ENCODE measurements at regions of chr9 and their contacts with region 1.

Region 1: DNA sequence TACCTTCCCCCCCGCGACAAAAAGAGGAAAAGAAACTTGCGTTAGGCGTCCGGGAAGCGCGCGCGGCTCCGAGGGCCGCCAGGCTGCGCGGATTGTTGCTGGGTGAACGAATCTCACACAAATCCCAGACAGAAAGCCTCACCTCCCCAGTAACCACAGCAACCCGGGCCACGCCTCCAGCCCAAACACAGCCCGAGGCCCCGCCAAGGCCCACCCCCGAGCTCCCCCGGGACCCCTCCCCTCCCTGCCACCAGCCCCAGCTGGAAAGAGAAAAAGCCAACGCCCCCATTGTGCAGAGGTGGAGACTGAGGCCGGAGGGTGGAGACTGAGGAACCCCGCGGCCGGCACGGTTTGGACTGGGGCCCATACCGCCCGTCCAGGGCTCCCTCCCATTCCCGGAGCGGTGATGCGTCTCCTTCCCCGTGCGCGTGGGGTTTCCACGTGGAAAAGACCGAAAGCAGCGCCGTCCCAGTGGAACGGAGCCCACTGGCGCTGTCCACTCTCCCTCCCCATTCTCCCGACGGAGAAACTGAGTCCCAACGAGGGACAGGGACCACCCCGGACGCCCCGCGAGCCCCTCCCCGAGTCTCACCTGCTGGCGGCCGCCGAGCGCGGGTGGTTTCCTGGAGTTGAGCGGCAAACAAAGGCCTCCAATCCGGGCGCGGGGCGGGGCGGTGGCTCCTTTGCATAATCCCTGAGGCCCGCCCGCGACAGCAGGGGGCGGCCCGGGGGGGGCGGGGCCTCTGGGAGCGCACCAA is 10.2 kb upstream of the AKNA start:
- DNase-seq: peak; percentile 99
- H3K4me3 Mint-ChIP-seq: peak overlapping the region; percentile 97
- H3K27ac Mint-ChIP-seq: peak overlapping the region; percentile 87
- H3K4me1 Mint-ChIP-seq: peaks cover 33% of the 10 kb centered on the region
- H3K27me3 Mint-ChIP-seq: no peaks in the 10 kb centered on the region

Region 2: DNA sequence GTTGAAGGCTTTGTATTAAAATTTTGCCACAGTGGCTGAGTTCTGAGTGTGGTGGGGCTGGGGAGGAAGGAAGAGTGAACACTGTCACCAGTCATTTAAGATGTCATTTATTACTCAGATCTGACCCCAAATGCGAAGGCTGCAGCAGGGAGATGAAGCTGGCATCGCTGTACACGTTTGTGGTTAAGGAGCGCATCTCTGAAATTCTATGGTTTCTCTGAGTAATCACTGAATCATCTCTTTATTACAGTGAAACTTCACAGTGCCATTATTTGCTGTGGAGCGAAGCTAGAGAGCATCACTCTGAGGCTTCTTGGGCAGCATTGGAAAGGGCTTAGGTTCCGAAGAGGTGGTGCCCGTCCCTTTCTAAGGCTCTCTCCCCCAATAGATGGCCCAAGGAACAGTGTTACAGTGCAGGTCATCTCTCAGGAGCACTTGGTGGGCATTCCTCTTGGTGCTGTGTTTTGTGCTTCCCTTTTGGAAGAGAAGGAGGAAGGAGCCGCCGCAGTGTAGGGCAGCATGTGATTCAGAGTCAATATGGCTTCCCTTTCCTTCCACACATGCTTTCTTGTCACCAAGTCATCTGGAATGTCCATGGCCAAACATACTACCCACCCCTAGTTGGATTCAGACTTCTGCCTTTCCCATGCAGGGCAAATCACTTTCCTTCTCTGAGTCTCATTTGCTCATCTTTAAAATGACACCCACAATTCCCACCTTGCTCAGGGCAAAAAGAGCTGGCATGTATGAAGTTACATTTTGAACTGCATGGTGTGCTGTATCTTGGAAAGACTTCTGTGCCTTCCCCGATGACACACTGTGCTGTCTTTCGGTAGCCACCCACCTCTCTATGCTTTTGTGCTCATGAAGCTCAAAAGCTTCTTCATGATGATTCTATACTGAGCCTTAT is 293.3 kb after region 1 on chr9:
- intact Hi-C with region 1: loop called (anchors 1 kb)
- DNase-seq: peak; percentile 93
- H3K4me3 Mint-ChIP-seq: peak overlapping the region; percentile 59
- H3K27ac Mint-ChIP-seq: peak overlapping the region; percentile 97
- H3K4me1 Mint-ChIP-seq: peaks cover 80% of the 10 kb centered on the region
- H3K27me3 Mint-ChIP-seq: no peaks in the 10 kb centered on the region